ENCODE measurements at regions of chr10 and their contacts with region 1.

Region 1: DNA sequence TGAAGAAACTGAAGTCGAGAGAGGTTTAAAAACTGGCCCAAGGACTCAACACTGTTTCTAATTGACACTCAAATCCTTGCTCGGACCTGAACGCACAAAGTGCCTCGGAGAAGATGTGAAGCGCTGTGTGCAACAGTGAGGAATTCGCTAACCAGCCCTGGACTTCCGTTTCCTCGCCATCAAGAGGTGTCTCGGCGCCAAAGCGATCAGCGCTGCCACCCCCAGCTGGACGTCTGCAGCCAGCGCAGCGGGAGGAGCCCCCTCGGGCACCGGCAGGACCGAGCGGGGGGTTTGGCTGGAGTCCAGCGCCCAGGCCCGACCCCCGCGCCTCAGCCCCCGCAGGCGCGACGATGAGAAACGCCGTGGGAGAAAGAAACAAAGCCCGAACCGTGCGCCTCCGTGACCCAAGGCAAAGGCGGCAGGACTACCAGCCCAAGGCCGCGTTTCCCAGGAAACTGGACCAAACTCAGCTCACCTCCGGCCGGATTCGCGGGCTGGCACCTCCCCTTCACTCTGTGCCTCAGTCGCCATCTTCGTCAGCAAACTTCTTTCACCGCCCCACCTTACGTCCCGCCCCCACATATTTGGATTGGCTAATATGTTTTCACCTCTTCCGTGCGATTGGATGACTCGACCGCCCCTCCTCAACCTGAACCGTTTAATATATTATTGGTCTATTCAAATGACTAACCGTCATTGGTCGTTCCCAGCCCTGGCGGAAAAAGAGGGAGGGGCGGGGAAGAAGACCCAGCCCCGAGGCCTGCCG is at the start of gene ARHGAP19:
- DNase-seq: peak; percentile 98
- H3K4me3 ChIP-seq: peak within 1 kb of the TSS; percentile 89
- H3K27ac ChIP-seq: peak within 1 kb of the TSS; percentile 84
- H3K4me1 ChIP-seq: peaks cover 26% of the 10 kb centered on the region
- CTCF ChIP-seq: peak; percentile 43; the same call in 1 of the 2 replicates
- total RNA-seq, gene ARHGAP19: 33.3 and 34.1 TPM in 2 replicates

Region 2: GRCh38 chr10:96794866-96795733 is 497.2 kb before region 1 on chr10:
- CTCF ChIA-PET with region 1: no interaction called
- POLR2A ChIA-PET with region 1: no interaction called
- intact Hi-C with region 1: no loop called
- DNase-seq: no peak
- H3K4me3 ChIP-seq: no peak overlapping the region
- H3K27ac ChIP-seq: no peak overlapping the region
- H3K4me1 ChIP-seq: peaks cover 5% of the 10 kb centered on the region
- CTCF ChIP-seq: no peak

Region 3: GRCh38 chr10:97318772-97319651 is 26.7 kb after region 1 on chr10 and contains the start of gene FRAT1:
- CTCF ChIA-PET with region 1: no interaction called
- POLR2A ChIA-PET with region 1: interaction called, 9 read pairs
- intact Hi-C with region 1: loop called (anchors 1 kb)
- DNase-seq: peak; percentile 90
- H3K4me3 ChIP-seq: peak within 1 kb of the TSS; percentile 95
- H3K27ac ChIP-seq: peak within 1 kb of the TSS; percentile 50
- H3K4me1 ChIP-seq: peaks cover 14% of the 10 kb centered on the region
- CTCF ChIP-seq: no peak
- total RNA-seq, gene FRAT1: 5.1 and 7.0 TPM in 2 replicates

Measured in OCI-LY7 (cell line).